A549 (cell line): ENCODE measurements at regions of chrX and their contacts with region 1.

Region 1: DNA sequence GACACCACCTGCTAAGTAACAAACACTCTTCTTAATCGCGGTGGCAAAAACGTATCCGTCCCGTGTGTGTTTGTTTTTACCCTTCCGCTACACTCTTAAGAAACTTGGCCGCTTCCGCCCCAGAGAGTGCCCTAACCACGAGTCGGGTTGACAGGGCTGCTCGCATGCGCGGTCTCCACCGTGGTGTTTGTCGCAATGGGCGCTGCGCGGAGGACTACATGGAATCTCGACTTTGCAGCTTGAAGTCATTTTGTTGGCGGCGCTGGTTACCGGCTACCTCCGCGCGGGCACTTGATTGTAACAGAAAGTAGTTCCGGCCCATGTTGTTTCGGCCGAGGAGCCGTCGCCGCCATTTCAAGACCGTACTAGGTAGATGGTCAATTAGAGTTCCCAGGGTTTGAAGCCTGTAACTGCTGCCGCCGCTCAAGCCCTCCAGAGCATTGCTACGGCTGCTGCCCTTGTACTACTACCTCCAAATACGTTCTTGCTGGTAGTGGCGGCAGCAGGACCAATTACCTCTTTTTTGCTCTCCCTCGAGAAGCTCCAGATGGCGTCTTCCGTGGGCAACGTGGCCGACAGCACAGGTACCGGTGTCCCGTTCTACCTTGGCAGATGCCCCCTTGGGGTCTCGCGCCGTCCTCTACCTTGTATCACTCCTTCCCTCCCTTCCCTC is at the start of gene OGT:
- DNase-seq: peak; percentile 85 to 99
- ATAC-seq: peak; percentile 89 to 94
- H3K4me3 ChIP-seq: peak within 1 kb of the TSS; percentile 82
- H3K27ac ChIP-seq: peak within 1 kb of the TSS; percentile 92 to 96
- H3K4me1 ChIP-seq: peaks cover 13% of the 10 kb centered on the region; the same call in 1 of the 3 replicates
- CTCF ChIP-seq: no peak
- EP300 ChIP-seq: no peak
- POLR2A ChIP-seq: peak; percentile 74
- RAD21 ChIP-seq: no peak
- polyA plus RNA-seq, gene OGT: 290 and 300 TPM in 2 replicates

Region 2: GRCh38 chrX:71365876-71366673 is 166.8 kb before region 1 on chrX and contains the start of gene TAF1:
- CTCF ChIA-PET with region 1: no interaction called
- POLR2A ChIA-PET with region 1: interaction called, 12 read pairs
- DNase-seq: peak; percentile 97 to 98
- ATAC-seq: peak; percentile 96 to 97
- H3K4me3 ChIP-seq: peak within 1 kb of the TSS; percentile 96
- H3K27ac ChIP-seq: peak within 1 kb of the TSS; percentile 97
- H3K4me1 ChIP-seq: peaks cover 11% of the 10 kb centered on the region
- CTCF ChIP-seq: no peak
- EP300 ChIP-seq: no peak
- POLR2A ChIP-seq: peak; percentile 82; the same call in 1 of the 2 replicates
- RAD21 ChIP-seq: no peak
- polyA plus RNA-seq, gene TAF1: 29.7 and 31.3 TPM in 2 replicates

Region 3: DNA sequence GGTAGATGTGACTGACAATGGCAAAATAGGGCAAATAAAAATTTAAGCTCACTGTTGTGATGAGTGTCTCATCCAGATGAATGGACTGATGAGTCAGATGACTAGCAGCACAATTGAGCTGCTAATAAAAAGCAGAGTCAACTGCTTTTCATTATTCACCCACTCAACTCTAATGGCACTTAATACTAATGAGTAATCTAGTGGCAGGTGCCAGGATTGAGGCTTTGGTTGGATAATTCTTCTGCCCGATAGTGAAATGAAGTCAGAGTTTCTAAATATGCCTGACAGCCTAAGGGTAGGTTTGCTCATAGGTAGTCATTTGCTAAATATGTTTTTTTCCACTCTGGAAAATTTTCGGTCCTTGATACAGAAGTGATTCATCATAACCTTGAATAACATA is 10.4 kb after region 1 on chrX:
- CTCF ChIA-PET with region 1: interaction called, 3 read pairs
- POLR2A ChIA-PET with region 1: interaction called, 22 read pairs
- DNase-seq: peak; percentile 29 to 35
- ATAC-seq: peak; percentile 54 to 59; a peak in 5 of 6 replicates
- H3K4me3 ChIP-seq: no peak overlapping the region
- H3K27ac ChIP-seq: 0 out of 6 replicates have a peak overlapping the region, but pooled peaks of 1 of the 2 experiments have one; percentile 19
- H3K4me1 ChIP-seq: peaks cover 63% of the 10 kb centered on the region
- CTCF ChIP-seq: no peak
- EP300 ChIP-seq: no peak
- POLR2A ChIP-seq: no peak
- RAD21 ChIP-seq: no peak